ENCODE measurements at regions of chr15 and their contacts with region 1.

Region 1: GRCh38 chr15:77419836-77420609 is at the start of gene PEAK1:
- DNase-seq: peak; percentile 100
- ATAC-seq: peak; percentile 99
- H3K4me3 Mint-ChIP-seq: peak within 1 kb of the TSS; percentile 95
- H3K27ac Mint-ChIP-seq: peak within 1 kb of the TSS; percentile 100
- H3K4me1 Mint-ChIP-seq: peaks cover 44% of the 10 kb centered on the region
- H3K27me3 Mint-ChIP-seq: no peaks in the 10 kb centered on the region
- total RNA-seq, gene PEAK1: 26.5 to 27.0 TPM

Region 2: GRCh38 chr15:76311100-76311953 is 1108.7 kb before region 1 on chr15 and contains the start of gene ETFA:
- CTCF ChIA-PET with region 1: no interaction called
- POLR2A ChIA-PET with region 1: no interaction called
- intact Hi-C with region 1: loop called in 1 of 2 experiments (anchors 1 kb)
- DNase-seq: peak; percentile 95
- ATAC-seq: peak; percentile 98
- H3K4me3 Mint-ChIP-seq: peak within 1 kb of the TSS; percentile 87
- H3K27ac Mint-ChIP-seq: peak within 1 kb of the TSS; percentile 69
- H3K4me1 Mint-ChIP-seq: peaks cover 28% of the 10 kb centered on the region
- H3K27me3 Mint-ChIP-seq: no peaks in the 10 kb centered on the region
- total RNA-seq, gene ETFA: 100 to 136 TPM

Region 3: DNA sequence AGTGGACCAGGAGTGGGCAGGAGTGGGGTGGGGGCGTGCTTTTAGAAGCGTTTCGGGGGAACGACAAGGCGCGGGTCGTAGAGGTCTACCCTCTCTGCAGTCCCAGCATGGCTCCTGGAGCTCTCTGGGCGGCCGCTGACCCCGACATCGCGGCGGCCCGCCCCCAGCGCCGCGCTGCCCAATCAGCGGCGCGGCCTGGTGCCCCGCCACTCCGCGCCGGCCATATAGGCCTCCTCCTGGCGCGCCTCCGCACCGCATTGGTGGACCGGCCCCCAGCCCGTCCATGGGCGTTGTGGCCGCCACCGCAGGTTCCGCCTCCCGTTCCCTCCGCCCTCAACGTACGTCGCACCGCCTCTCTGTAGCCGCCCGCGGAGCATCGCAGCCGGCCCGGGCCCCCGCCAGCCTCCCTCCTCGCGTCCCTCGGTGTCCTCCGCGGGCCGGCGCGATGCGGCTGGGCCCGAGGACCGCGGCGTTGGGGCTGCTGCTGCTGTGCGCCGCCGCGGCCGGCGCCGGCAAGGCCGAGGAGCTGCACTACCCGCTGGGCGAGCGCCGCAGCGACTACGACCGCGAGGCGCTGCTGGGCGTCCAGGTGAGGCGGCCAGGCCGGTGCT is 488.5 kb before region 1 on chr15 and contains the start of gene RCN2:
- CTCF ChIA-PET with region 1: no interaction called
- POLR2A ChIA-PET with region 1: no interaction called
- intact Hi-C with region 1: loop called (anchors 1 kb)
- DNase-seq: peak; percentile 96
- ATAC-seq: peak; percentile 99
- H3K4me3 Mint-ChIP-seq: peak within 1 kb of the TSS; percentile 81
- H3K27ac Mint-ChIP-seq: peak within 1 kb of the TSS; percentile 85
- H3K4me1 Mint-ChIP-seq: peaks cover 31% of the 10 kb centered on the region
- H3K27me3 Mint-ChIP-seq: no peaks in the 10 kb centered on the region
- total RNA-seq, gene RCN2: 16.6 to 18.9 TPM

Region 4: DNA sequence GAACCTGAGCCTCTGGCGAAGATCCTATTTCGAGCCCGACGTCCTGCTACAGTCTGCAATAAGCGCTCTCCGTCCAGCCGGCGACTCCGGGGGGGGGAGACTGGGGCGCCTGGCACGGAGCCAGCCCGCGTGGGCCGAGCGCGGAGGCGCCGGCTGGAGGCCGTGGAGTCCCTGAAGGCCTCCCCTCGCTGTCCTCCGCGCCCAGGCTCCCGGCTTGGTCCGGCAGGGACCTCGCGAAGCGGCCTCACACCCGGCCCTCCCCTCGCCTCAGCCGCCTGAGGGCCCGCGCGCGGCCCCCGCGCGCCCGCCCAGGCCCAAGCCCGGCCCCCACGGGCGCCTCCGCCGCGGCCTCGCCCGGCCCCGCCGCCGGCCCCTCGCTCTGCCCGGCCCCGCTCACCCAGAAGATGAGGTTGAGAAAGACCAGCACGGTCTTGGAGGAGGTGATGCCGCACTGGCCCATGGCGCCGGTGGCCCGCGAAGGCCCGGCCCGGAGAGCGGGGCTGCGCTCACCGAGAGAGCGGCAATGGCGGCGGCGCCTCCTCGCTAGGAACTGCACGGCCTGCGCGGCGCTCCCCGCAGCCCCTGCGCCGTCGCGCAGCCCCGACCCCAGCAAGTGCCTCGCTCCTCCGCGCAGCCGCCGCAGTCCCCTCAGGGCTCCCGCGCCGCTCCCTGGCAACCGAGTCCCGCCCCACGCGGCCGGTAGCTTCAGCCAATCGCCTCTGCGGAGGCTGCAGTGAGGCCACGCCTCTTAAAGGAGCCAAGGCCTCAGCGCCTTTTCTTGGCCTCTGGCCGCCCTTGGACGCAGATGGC is 349.3 kb before region 1 on chr15 and contains the start of gene TSPAN3:
- CTCF ChIA-PET with region 1: no interaction called
- POLR2A ChIA-PET with region 1: no interaction called
- intact Hi-C with region 1: loop called in 1 of 2 experiments (anchors 1 kb)
- DNase-seq: peak; percentile 95
- ATAC-seq: peak; percentile 99
- H3K4me3 Mint-ChIP-seq: peak within 1 kb of the TSS; percentile 75
- H3K27ac Mint-ChIP-seq: peak within 1 kb of the TSS; percentile 65
- H3K4me1 Mint-ChIP-seq: peaks cover 29% of the 10 kb centered on the region
- H3K27me3 Mint-ChIP-seq: no peaks in the 10 kb centered on the region
- total RNA-seq, gene TSPAN3: 26.2 to 28.4 TPM

Region 5: DNA sequence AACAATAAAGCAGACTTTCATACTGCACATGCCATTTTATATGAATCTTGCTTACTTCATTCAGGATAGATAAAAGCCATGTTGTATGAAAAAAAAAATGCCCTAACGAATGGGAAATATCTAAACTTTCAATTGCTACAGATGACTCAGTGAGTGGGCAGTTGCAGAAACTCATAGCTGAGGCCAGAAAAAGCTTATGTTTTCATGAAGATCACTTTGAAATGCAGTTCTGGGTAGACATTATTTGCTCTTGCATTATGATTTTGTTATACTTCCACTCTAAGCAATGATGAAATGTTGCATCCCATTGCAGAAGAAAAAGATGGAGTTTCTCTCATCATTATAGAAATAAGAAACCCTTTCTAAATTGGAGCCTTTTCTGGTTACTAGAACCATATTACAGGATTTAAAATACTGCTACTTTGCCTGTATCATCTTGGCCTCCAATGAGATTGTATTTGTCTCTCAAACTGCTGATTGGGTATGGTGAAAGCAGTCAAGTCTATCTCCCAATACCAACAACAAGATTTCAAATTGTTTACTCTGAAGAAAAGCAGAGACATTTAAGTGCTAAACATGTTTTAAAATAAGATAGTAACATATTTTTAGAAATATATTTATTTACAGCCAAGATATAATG is 17.2 kb before region 1 on chr15:
- CTCF ChIA-PET with region 1: interaction called, 3 read pairs
- POLR2A ChIA-PET with region 1: no interaction called
- intact Hi-C with region 1: loop called in 1 of 2 experiments (anchors 2 kb)
- DNase-seq: peak; percentile 19
- ATAC-seq: peak; percentile 82
- H3K4me3 Mint-ChIP-seq: no peak overlapping the region
- H3K27ac Mint-ChIP-seq: peak overlapping the region; percentile 78
- H3K4me1 Mint-ChIP-seq: peaks cover 34% of the 10 kb centered on the region
- H3K27me3 Mint-ChIP-seq: no peaks in the 10 kb centered on the region

Region 6: DNA sequence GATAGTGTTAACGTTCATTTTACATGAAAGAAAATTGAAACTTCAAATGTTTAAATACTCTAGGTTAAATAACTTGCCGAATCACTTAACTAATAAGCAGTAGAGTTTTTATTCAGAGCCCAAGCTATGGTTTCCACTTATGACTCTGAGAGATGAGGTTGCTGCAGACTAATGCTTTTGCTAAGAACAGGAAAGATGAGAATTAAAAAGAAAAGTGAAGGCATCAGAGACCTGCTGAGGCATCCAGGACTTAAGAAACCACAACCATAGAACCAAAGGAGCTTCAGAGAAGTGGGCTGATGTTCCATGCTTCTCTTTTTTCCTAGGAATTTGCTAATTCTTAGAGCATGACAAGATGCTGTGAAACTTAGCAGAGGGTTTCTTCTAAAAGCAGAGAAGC is 10.2 kb after region 1 on chr15:
- CTCF ChIA-PET with region 1: interaction called, 5 read pairs
- POLR2A ChIA-PET with region 1: interaction called, 5 read pairs
- intact Hi-C with region 1: loop called in 1 of 2 experiments (anchors 1 kb)
- DNase-seq: no peak
- ATAC-seq: peak; percentile 95
- H3K4me3 Mint-ChIP-seq: peak overlapping the region; percentile 34
- H3K27ac Mint-ChIP-seq: peak overlapping the region; percentile 43
- H3K4me1 Mint-ChIP-seq: peaks cover 50% of the 10 kb centered on the region
- H3K27me3 Mint-ChIP-seq: no peaks in the 10 kb centered on the region

Region 7: DNA sequence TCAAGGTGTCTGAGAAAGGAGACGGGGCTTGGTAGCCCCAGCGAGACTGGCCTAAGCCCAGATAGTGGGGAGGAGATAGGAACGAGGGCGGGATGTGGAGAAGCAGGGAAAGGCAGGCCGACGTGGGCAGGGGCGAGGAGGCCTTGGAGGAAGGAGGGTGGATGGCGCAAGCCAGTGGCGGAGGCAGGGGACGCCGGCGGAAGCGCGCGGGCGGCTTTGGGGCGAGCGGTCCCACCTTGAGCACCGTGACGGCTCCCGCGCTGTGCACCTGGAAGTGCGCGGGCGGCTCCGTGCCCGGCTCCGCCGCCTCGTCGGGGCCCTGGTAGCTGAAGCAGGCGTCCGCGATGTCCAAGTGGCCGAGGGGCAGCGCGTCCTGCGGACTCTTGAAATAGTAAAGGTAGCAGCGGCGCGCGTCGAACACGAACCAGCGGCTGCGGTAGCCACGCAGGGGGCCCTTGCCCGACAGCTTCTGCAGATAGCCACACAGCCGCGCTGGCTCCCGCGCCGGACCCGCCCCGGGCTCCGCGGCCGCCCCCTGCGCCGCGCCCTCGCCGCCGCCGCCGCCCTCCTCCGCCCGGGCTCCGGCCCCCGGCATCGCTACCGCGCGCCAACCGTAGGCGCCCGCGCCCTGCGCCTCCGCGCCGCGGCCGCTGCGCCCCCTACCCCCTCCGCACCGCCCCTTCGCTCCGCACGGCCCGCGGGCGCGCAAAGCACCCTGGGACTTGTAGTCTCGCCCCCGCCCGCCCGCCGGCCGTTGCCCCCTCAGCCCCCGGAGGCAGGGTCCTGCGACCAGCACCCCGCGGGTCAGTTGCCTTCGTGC is 657.2 kb after region 1 on chr15 and contains the start of gene TBC1D2B:
- CTCF ChIA-PET with region 1: no interaction called
- POLR2A ChIA-PET with region 1: no interaction called
- intact Hi-C with region 1: loop called in 1 of 2 experiments (anchors 10 kb)
- DNase-seq: peak; percentile 86
- ATAC-seq: peak; percentile 76
- H3K4me3 Mint-ChIP-seq: peak within 1 kb of the TSS; percentile 95
- H3K27ac Mint-ChIP-seq: peak within 1 kb of the TSS; percentile 93
- H3K4me1 Mint-ChIP-seq: peaks cover 44% of the 10 kb centered on the region
- H3K27me3 Mint-ChIP-seq: no peaks in the 10 kb centered on the region
- total RNA-seq, gene TBC1D2B: 49.3 to 52.0 TPM